A549 (cell line): ENCODE measurements at regions of chr14 and their contacts with region 1.

Region 1: DNA sequence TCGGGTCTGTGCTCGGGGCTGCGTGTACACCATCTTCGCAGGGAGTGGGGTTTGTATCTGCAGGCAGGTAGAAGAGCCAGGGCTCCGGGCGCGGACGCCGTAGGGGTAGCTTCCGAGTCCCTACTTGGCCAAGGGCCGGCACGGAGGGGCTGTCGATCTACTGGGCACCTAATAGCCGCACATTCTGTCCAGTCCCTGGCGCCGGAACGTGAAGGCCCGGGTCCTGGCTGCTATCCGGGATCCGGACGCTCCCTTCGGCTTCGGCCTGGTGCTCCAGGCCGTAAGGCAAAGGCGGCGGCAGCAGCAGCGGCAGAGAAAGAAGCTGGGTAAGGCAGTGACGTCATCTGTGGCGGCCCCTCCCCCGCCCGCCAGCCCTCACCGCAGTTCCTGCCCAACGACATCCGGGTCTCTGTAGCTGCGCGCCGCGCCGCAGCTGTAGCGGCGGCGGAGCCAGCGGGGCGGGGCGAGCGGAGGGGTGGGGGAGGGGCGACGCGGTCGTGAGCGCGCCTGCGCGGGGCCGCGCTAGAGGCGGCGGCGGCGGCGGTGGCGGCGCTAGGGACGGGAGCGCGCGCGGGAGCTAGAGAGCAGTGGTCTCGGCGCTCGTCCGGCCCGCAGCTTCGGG is at the start of gene PPM1A:
- DNase-seq: peak; percentile 91 to 95
- ATAC-seq: peak; percentile 83 to 87
- H3K4me3 ChIP-seq: peak within 1 kb of the TSS; percentile 97
- H3K27ac ChIP-seq: peak within 1 kb of the TSS; percentile 99
- H3K4me1 ChIP-seq: peaks cover 34% of the 10 kb centered on the region
- CTCF ChIP-seq: no peak
- EP300 ChIP-seq: no peak
- POLR2A ChIP-seq: peak; percentile 65
- RAD21 ChIP-seq: no peak
- polyA plus RNA-seq, gene PPM1A: 58.3 and 76.6 TPM in 2 replicates

Region 2: DNA sequence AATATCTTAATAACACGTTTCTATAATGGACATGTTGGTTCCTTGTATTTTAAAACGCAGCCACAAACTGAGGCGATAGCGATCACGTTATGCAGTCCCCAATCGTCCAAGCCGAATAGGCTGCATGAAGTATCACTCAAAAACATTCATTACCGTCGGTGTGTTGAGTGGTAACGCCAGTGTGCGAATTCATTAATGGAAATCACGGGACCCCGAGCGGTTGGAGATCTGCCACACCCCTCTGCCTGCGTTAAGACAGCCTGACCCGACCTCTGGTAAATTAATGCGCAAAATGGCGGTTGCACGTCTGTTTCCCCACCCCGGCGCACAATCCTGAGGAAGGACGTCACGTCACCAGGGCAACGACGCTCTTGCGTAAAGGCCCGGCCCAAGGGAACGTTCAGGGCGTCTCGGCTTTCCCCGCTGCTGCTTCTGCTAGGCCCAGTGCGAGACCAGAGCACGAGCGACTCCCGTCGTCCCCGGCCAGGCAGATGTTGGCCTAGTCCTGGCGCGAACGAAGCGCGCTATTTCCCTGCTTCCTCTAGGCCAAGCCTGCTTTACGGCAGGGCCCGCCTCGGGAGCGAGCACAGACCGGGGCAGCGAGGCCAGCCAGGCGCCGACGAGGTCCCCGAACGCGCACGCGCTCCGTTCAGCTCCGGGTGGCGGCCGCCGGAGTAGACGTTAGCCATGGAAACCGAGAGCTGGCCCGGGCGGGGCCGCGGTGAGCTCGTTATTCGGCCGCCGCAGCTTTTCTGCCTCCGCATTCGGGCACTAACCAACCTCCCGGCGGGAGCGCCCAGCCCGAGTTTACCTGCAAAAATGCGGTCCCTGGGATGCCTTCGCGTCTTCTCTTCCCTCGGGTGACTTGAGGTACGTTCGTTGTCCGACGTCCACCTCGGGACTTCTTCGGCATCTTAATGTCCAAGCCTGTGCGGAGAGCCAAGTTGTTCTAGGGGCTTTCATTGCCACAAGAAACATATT is 157.0 kb before region 1 on chr14 and contains the start of gene PCNX4:
- CTCF ChIA-PET with region 1: no interaction called
- POLR2A ChIA-PET with region 1: interaction called, 19 read pairs
- DNase-seq: peak; percentile 86 to 99
- ATAC-seq: peak; percentile 96 to 97
- H3K4me3 ChIP-seq: peak within 1 kb of the TSS; percentile 72
- H3K27ac ChIP-seq: peak within 1 kb of the TSS; percentile 92 to 97
- H3K4me1 ChIP-seq: peaks cover 31% of the 10 kb centered on the region
- CTCF ChIP-seq: no peak
- EP300 ChIP-seq: no peak
- POLR2A ChIP-seq: peak; percentile 95
- RAD21 ChIP-seq: no peak
- polyA plus RNA-seq, gene PCNX4: 51.0 and 94.5 TPM in 2 replicates

Region 3: GRCh38 chr14:60151715-60152114 is 97.1 kb before region 1 on chr14:
- CTCF ChIA-PET with region 1: no interaction called
- POLR2A ChIA-PET with region 1: interaction called, 11 read pairs
- DNase-seq: peak; percentile 51 to 85
- ATAC-seq: peak; percentile 97 to 100
- H3K4me3 ChIP-seq: no peak overlapping the region
- H3K27ac ChIP-seq: peak overlapping the region; percentile 43 to 68; a peak in 5 of 6 replicates
- H3K4me1 ChIP-seq: peaks cover 17% of the 10 kb centered on the region
- CTCF ChIP-seq: no peak
- EP300 ChIP-seq: peak in 1 of 2 experiments; percentile 22; a peak in 1 of 5 replicates
- POLR2A ChIP-seq: no peak
- RAD21 ChIP-seq: no peak